Esophagus squamous epithelium (tissue), 5 donors: ENCODE measurements at regions of chr16 and their contacts with region 1.

Region 1: GRCh38 chr16:69930117-69930776 is 20.9 kb upstream of the CLEC18A start:
- DNase-seq: no peak
- H3K4me3 ChIP-seq: no peak overlapping the region
- H3K27ac ChIP-seq: no peak overlapping the region
- H3K4me1 ChIP-seq: peaks cover 0 to 37% (median 0%) of the 10 kb centered on the region in 3 donors
- H3K27me3 ChIP-seq: no peaks in the 10 kb centered on the region
- CTCF ChIP-seq: peak; percentile 51 to 71 (median 63)
- POLR2A ChIP-seq: no peak

Region 2: GRCh38 chr16:69796351-69797118 is 133.7 kb before region 1 on chr16:
- intact Hi-C with region 1: loop called (anchors 5 kb)
- DNase-seq: no peak
- H3K4me3 ChIP-seq: peak overlapping the region in 1 of 4 donors; percentile 37
- H3K27ac ChIP-seq: no peak overlapping the region
- H3K4me1 ChIP-seq: peaks cover 0 to 8% (median 0%) of the 10 kb centered on the region in 3 donors
- H3K27me3 ChIP-seq: no peaks in the 10 kb centered on the region
- CTCF ChIP-seq: peak; percentile 80 to 93 (median 83)
- POLR2A ChIP-seq: no peak